Posterior cingulate gyrus (tissue), 11 donors: ENCODE measurements at regions of chr10 and their contacts with region 1.

Region 1: DNA sequence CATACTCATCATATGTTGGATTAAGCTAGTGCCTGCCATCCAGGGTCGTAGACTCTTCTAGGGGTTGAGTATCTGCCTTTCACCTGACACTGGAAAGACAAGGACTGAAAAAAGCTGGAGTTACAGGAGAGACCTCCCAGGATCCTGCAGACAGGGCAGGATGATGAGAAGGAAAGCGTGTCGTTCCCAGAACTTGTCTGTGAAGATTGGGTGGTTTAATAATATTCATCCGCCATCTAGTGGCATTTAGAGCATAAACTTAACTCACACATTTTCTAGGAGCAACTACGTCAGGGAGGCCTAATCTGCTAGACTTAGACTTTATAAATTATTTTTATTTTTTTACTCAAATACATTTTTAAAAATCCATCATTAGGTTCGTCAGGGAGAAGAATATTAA is 59.6 kb downstream of the ADRB1 start:
- DNase-seq: peak in 1 of 10 donors; percentile 62

Region 2: GRCh38 chr10:113704637-113705343 is 398.5 kb before region 1 on chr10:
- intact Hi-C with region 1: loop called (anchors 5 kb)
- DNase-seq: peak in 3 of 10 donors; percentile 30 to 56 (median 30)

Region 3: GRCh38 chr10:113802997-113803396 is 300.3 kb before region 1 on chr10:
- intact Hi-C with region 1: loop called (anchors 1 kb)
- DNase-seq: no peak

Region 4: GRCh38 chr10:113891476-113891875 is 211.8 kb before region 1 on chr10:
- intact Hi-C with region 1: loop called (anchors 10 kb)
- DNase-seq: peak in 7 of 10 donors; percentile 14 to 82 (median 39)